Panc1 (cell line): ENCODE measurements at regions of chr3 and their contacts with region 1.

Region 1: GRCh38 chr3:52820736-52821135 is 9.7 kb downstream of the ITIH4 start:
- DNase-seq: no peak
- ATAC-seq: peak; percentile 82
- H3K4me3 ChIP-seq: no peak overlapping the region
- H3K27ac ChIP-seq: no peak overlapping the region
- H3K4me1 ChIP-seq: no peaks in the 10 kb centered on the region
- H3K27me3 ChIP-seq: no peaks in the 10 kb centered on the region
- CTCF ChIP-seq: peak; percentile 85

Region 2: DNA sequence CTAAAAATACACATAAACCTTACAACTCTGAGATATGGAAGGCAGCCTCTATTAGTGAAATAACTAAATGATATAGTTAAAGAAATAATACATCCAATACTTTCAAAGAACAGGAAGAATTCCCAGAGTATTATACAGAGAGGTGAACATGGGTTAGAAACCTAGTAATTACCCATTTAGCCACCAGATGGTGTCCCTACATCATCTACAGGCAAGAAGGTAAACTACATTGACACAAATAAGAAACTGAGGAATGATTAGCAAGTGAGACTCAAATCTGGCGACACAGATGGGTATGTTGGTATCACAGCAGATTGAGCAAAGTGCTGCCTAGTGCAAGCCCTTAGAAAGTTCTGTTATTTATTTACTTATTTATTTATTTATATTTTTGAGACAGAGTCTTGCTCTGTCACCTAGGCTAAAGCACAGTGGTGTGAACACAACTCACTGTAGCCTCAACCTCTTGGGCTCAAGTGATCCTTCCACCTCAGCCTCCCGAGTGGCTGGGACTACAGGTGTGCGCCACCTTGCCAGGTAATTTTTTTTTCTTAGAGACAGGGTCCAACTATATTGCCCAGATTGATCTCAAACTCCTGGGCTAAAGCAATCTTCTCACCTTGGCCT is 78.2 kb before region 1 on chr3:
- CTCF ChIA-PET with region 1: no interaction called
- POLR2A ChIA-PET with region 1: no interaction called
- in situ Hi-C with region 1: no loop called
- intact Hi-C with region 1: loop called (anchors 10 kb)
- DNase-seq: peak; percentile 17
- ATAC-seq: peak; percentile 69; the same call in 1 of the 2 replicates
- H3K4me3 ChIP-seq: no peak overlapping the region
- H3K27ac ChIP-seq: no peak overlapping the region
- H3K4me1 ChIP-seq: no peaks in the 10 kb centered on the region
- H3K27me3 ChIP-seq: no peaks in the 10 kb centered on the region
- CTCF ChIP-seq: peak; percentile 59

Region 3: GRCh38 chr3:53005854-53006513 is 185.2 kb after region 1 on chr3:
- CTCF ChIA-PET with region 1: no interaction called
- POLR2A ChIA-PET with region 1: no interaction called
- in situ Hi-C with region 1: no loop called
- intact Hi-C with region 1: no loop called
- DNase-seq: no peak
- ATAC-seq: no peak
- H3K4me3 ChIP-seq: no peak overlapping the region
- H3K27ac ChIP-seq: no peak overlapping the region
- H3K4me1 ChIP-seq: peaks cover 1% of the 10 kb centered on the region; the same call in 1 of the 2 replicates
- H3K27me3 ChIP-seq: no peaks in the 10 kb centered on the region
- CTCF ChIP-seq: no peak